ENCODE measurements at regions of chr1 and their contacts with region 1.

Region 1: GRCh38 chr1:38026592-38027200 is 14.2 kb downstream of the UTP11 start:
- DNase-seq: peak; percentile 40 to 72
- H3K4me3 ChIP-seq: no peak overlapping the region
- H3K4me1 ChIP-seq: no peaks in the 10 kb centered on the region
- H3K27me3 ChIP-seq: no peaks in the 10 kb centered on the region

Region 2: GRCh38 chr1:38489844-38490270 is 463.2 kb after region 1 on chr1:
- in situ Hi-C with region 1: loop called (anchors 10 kb)
- DNase-seq: peak; percentile 29 to 84
- H3K4me3 ChIP-seq: no peak overlapping the region
- H3K4me1 ChIP-seq: no peaks in the 10 kb centered on the region
- H3K27me3 ChIP-seq: no peaks in the 10 kb centered on the region; the same call in 1 of the 2 replicates

Region 3: GRCh38 chr1:38818175-38818976 is 791.7 kb after region 1 on chr1:
- in situ Hi-C with region 1: loop called (anchors 10 kb)
- DNase-seq: peak; percentile 35 to 82
- H3K4me3 ChIP-seq: peak overlapping the region; percentile 33
- H3K4me1 ChIP-seq: no peaks in the 10 kb centered on the region; the same call in 1 of the 2 replicates
- H3K27me3 ChIP-seq: peaks cover 34% of the 10 kb centered on the region

Region 4: GRCh38 chr1:38834937-38835827 is 808.5 kb after region 1 on chr1:
- in situ Hi-C with region 1: loop called (anchors 5 kb)
- DNase-seq: peak; percentile 75 to 85
- H3K4me3 ChIP-seq: no peak overlapping the region
- H3K4me1 ChIP-seq: peaks cover 14% of the 10 kb centered on the region
- H3K27me3 ChIP-seq: peaks cover 3% of the 10 kb centered on the region; the same call in 1 of the 2 replicates

Measured in HAP-1 (cell line).